Mammary epithelial cell (primary cell): ENCODE measurements at regions of chr18 and their contacts with region 1.

Region 1: DNA sequence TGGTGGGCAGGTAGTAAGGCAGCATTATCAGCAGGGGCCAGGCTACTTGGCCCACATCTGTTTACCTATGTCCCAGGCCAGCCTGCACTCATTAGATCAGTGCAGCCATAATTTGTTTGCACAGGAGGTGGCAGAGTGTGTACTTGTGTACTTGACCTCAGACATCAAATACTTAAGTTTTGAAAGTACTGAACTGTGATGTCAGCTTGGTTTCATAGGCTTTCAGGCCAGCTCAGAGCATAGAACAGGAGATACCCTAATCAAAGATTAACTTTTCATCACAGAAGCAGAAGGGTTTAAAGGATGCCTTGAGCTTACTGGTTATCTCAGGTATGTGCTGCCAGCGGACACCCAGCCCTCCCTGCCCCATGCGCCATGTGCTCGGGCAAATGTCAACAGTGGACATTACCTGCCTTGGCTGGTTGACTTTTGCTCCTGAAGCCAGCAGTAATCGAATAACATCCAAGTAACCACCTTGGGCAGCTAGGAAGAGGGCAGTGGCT is 33.2 kb downstream of the ANKRD29 start:
- DNase-seq: no peak
- H3K4me3 ChIP-seq: no peak overlapping the region
- H3K27ac ChIP-seq: no peak overlapping the region
- H3K4me1 ChIP-seq: peaks cover 29% of the 10 kb centered on the region
- H3K27me3 ChIP-seq: no peaks in the 10 kb centered on the region
- CTCF ChIP-seq: no peak

Region 2: DNA sequence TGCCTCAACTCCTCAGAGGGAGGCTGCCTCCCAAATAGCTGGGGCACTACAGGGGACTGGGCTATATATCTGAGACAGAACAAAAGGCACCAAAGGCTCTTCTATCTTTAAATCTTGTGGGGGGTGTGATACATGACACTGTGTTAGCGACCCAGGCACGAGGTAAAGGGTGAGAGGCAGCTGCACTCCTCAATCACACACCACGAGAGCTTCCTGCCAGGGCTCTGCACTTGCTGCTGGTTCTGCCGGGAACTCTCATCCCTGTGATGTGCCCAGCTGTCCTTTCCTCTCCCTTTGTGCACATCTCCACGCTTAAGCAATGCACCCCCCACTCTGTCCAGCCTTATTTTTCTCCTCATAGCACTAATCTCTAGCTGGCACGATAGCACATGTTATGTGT is 75.6 kb before region 1 on chr18:
- CTCF ChIA-PET with region 1: no interaction called
- dilution Hi-C with region 1: loop called (anchors 5 kb)
- in situ Hi-C with region 1: no loop called
- intact Hi-C with region 1: no loop called
- DNase-seq: no peak
- H3K4me3 ChIP-seq: no peak overlapping the region
- H3K27ac ChIP-seq: no peak overlapping the region
- H3K4me1 ChIP-seq: no peaks in the 10 kb centered on the region
- H3K27me3 ChIP-seq: no peaks in the 10 kb centered on the region
- CTCF ChIP-seq: no peak

Region 3: DNA sequence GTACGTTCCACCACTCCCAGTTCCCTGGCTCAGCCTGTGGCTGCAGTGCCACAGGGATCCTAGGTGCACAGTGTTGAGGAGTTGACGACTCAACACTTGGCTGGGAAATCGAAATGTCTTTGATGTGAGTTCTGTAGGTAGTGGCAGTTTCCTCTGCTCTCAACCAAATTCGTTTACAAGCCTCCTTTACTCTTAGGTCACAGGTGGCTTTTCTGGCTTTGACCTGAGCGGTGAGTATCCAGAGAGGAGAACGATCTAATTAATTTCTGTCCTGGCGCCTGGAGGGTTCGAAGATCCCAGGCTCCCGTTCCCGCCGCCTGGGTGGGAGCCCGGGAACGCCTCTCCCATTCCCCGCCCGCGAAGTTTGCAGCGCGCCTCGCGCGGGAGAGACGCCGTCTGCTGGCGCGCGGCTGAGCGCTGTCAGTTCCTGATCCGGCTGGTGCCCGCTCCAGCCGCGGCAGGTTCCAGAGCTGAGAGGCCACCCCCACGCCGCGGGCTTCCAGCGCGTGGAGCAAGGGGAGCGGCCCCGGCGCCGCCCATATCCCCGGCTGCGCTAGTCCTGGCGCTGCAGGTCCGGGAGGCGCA is 59.6 kb after region 1 on chr18 and contains the start of gene LAMA3:
- CTCF ChIA-PET with region 1: no interaction called
- dilution Hi-C with region 1: no loop called
- in situ Hi-C with region 1: loop called in 1 of 2 experiments (anchors 10 kb)
- intact Hi-C with region 1: no loop called
- DNase-seq: peak; percentile 57
- H3K4me3 ChIP-seq: peak within 1 kb of the TSS; percentile 52 to 63 (median 62)
- H3K27ac ChIP-seq: no peak within 1 kb of the TSS
- H3K4me1 ChIP-seq: peaks cover 17% of the 10 kb centered on the region
- H3K27me3 ChIP-seq: no peaks in the 10 kb centered on the region
- CTCF ChIP-seq: peak in 1 of 2 donors; percentile 50
- total RNA-seq, gene LAMA3: 1,329 to 2,471 TPM

Region 4: DNA sequence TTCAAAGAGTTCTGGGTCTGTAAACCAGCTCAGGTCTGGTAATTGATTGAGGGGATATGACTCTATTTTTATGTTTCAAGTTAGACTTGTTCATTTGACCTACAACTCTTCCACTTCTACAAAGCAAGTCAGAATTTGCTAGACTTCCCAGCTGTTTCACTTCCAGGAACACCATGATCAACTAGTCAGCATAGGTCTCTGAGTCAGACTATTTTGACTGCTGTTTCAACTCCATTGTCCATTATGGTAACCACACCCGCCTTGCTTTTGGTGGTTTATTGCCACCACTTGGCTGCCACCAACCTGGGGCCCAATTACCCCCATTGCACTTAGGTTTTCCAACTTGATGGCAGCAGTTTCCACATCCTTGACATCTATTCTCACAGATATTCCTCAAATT is 176.4 kb after region 1 on chr18:
- CTCF ChIA-PET with region 1: no interaction called
- dilution Hi-C with region 1: no loop called
- in situ Hi-C with region 1: loop called (anchors 10 kb)
- intact Hi-C with region 1: no loop called
- DNase-seq: peak; percentile 81
- H3K4me3 ChIP-seq: no peak overlapping the region
- H3K27ac ChIP-seq: no peak overlapping the region
- H3K4me1 ChIP-seq: peaks cover 10% of the 10 kb centered on the region
- H3K27me3 ChIP-seq: no peaks in the 10 kb centered on the region
- CTCF ChIP-seq: no peak